ENCODE measurements at regions of chr10 and their contacts with region 1.

Region 1: DNA sequence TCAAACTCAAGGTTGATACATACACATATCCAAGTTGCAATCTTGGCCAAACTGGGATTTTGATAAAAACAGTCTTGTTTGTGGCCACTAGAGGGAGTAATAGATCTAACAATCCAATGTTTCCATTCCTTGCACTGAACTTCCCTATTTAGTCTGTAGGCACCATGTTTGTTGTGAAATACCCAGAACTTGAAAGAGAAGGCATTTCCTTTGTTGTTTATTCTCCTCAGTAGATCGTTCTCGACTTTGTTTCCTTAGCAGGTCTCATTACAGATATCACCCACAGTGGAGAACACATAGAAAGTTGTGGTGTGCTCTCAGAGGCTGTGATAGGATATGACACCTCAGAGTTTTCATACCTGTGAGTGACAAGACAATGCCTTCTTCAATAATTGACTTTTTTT is 70.3 kb upstream of the MXI1 start:
- DNase-seq: peak; percentile 5
- H3K4me3 ChIP-seq: no peak overlapping the region
- H3K27ac ChIP-seq: no peak overlapping the region
- H3K4me1 ChIP-seq: peaks cover 8% of the 10 kb centered on the region
- H3K27me3 ChIP-seq: no peaks in the 10 kb centered on the region
- CTCF ChIP-seq: peak in 2 of 3 experiments; percentile 50 to 64

Region 2: DNA sequence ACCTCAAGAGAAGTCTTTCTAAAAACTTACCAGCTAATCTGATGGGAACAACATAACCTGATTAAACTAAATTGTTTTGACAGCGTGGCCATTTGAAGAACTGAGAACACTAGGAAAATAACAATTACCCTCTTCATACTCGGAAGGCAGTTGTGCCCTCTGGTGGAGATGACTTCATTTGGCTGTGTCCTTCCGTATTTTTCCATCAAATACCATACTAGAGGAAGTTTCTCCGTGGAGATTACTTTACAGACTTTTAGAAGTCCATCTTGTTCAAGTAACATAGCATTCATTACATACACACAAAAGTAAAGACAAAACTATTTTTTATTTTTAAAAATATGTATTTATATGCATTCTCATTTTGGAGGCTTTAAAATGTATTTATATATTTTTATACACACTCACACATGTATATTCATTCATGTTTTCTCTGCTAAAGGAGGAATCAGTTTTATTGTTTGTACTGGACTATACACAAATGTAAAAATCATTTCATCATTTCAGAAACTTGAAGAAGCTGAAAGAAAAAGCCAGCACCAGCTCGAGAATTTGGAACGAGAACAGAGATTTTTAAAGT is 142.4 kb after region 1 on chr10:
- dilution Hi-C with region 1: loop called (anchors 25 kb)
- DNase-seq: no peak
- H3K4me3 ChIP-seq: no peak overlapping the region
- H3K27ac ChIP-seq: no peak overlapping the region
- H3K4me1 ChIP-seq: no peaks in the 10 kb centered on the region
- H3K27me3 ChIP-seq: no peaks in the 10 kb centered on the region
- CTCF ChIP-seq: peak; percentile 55 to 76 (median 64)

Region 3: DNA sequence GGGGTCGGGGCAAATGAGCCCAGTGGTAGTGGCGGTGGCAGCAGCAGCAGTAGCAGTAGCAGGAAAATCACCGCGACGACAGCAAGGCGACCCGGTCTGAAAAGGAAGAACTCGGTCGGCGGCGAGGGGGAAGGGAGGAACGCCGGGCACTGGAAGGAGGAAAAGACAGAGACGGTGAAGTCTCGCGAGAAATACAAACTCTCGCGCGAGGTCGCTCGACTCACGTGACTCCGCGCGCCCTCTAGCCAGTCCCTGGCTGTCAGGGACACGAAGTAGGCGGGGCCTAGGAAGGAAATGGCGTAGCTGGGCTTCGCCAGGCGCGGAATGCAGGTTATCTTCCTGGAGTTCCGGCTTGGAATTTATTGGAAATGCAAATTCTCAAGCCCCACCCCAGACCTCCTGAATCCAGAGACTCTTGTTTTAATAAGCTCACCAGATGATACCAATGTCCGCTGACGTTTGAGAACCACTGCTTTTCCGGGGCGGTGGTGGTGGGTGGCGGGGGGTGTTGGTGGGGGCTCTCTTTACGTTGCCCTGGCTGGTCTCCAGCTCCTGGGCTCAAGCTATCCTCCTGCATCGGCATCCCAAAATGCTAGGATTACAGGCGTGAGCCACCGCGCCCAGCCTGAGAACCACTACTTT is 167.8 kb after region 1 on chr10 and contains the start of gene SMNDC1:
- dilution Hi-C with region 1: no loop called
- DNase-seq: peak; percentile 93
- H3K4me3 ChIP-seq: peak within 1 kb of the TSS; percentile 78 to 97 (median 92)
- H3K27ac ChIP-seq: peak within 1 kb of the TSS; percentile 84
- H3K4me1 ChIP-seq: peaks cover 33% of the 10 kb centered on the region
- H3K27me3 ChIP-seq: no peaks in the 10 kb centered on the region
- CTCF ChIP-seq: no peak
- polyA plus RNA-seq, gene SMNDC1: 9.5 to 19.8 TPM (median 17.3 TPM) in 3 replicates

Measured in keratinocyte (primary cell).